ENCODE measurements at regions of chr12 and their contacts with region 1.

Region 1: DNA sequence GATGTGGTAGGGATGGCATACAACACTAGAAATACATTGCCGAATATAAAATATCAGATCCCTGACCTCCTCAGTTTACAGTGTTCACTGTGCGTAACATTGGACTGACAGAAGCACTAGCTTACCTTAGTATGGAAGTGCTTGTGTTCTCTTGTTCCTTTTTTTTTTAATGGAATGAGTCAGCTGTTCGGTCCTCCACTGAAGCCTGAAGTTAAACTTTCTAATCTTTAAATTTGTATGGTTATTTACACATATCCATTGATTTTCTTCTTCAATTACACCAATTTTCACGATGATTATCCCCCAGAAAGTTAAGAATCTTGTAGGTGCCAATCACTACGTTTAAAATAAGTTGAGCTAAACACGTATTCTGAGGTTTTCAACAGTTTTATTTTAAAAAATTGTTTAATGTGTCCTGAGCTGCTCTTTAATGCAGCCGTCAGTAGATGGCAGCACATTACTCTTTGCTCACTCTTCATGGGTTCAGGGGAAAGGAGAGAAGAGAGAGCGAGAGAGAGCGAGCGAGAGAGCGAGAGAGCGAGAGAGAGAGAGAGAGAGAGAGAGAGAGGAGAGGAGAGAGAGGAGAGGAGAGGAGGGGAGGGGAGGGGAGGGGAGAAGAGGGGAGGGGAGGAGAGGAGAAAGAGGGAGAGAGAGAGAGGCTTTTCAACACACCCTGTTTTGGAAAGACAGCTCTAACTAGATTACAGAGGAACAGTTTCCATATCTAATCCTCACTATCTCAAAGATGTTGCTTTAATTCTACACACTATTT is 134.7 kb upstream of the SCAF11 start:
- DNase-seq: no peak
- ATAC-seq: peak; percentile 96
- H3K4me3 ChIP-seq: no peak overlapping the region
- H3K27ac ChIP-seq: no peak overlapping the region
- H3K4me1 ChIP-seq: no peaks in the 10 kb centered on the region
- H3K27me3 ChIP-seq: no peaks in the 10 kb centered on the region; a peak in 1 of 4 replicates
- CTCF ChIP-seq: peak; percentile 58 to 74 (median 61); a peak in 5 of 6 replicates
- EP300 ChIP-seq: no peak
- POLR2A ChIP-seq: no peak
- RAD21 ChIP-seq: peak; percentile 84

Region 2: GRCh38 chr12:46147144-46147543 is 22.1 kb after region 1 on chr12:
- CTCF ChIA-PET with region 1: interaction called, 36 read pairs
- POLR2A ChIA-PET with region 1: no interaction called
- RAD21 ChIA-PET with region 1: interaction called, 22 read pairs
- SMC1A ChIA-PET with region 1: interaction called, 22 read pairs
- in situ Hi-C with region 1: no loop called
- intact Hi-C with region 1: no loop called
- DNase-seq: no peak
- ATAC-seq: peak; percentile 87
- H3K4me3 ChIP-seq: no peak overlapping the region
- H3K27ac ChIP-seq: no peak overlapping the region
- H3K4me1 ChIP-seq: no peaks in the 10 kb centered on the region
- H3K27me3 ChIP-seq: no peaks in the 10 kb centered on the region
- CTCF ChIP-seq: no peak
- EP300 ChIP-seq: no peak
- POLR2A ChIP-seq: no peak
- RAD21 ChIP-seq: no peak

Region 3: GRCh38 chr12:46209914-46210872 is 85.2 kb after region 1 on chr12:
- CTCF ChIA-PET with region 1: interaction called, 16 read pairs
- POLR2A ChIA-PET with region 1: no interaction called
- RAD21 ChIA-PET with region 1: interaction called, 3 read pairs
- SMC1A ChIA-PET with region 1: interaction called, 21 read pairs
- in situ Hi-C with region 1: no loop called
- intact Hi-C with region 1: no loop called
- DNase-seq: peak; percentile 68
- ATAC-seq: peak; percentile 84
- H3K4me3 ChIP-seq: no peak overlapping the region
- H3K27ac ChIP-seq: peak overlapping the region; percentile 85
- H3K4me1 ChIP-seq: peaks cover 59% of the 10 kb centered on the region
- H3K27me3 ChIP-seq: no peaks in the 10 kb centered on the region
- CTCF ChIP-seq: no peak
- EP300 ChIP-seq: peak; percentile 83 to 86
- POLR2A ChIP-seq: peak; percentile 52; the same call in 1 of the 2 replicates
- RAD21 ChIP-seq: no peak

Region 4: DNA sequence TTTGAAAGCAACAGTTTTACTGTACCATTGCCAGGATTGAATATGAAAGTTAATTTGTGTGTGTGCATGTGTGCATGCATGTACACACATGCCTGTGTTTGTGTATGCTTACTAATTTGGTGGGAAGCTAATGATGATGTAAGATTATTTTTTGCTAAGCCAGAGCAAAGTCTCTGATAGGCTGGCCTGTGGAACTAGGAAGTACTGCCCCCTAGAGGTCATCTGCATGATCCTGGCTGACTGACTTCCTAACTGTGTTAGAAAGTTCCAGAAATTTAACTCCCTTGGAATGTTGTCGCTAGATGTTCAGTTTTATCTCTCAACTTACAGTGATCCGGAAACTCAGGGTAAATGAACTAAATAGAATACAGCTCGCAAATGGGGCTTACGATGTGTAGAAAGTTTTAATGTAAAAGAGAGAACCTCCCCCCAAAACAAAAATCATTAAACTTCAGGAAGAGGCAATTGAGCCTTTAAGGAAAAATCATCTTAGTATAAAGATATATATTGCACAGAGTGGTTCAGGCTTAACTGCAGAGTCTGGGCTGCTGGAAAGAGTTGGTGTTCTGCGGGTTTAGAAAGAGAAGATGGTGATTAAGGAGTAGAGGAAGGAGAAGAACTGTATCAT is 178.1 kb after region 1 on chr12:
- CTCF ChIA-PET with region 1: interaction called, 102 read pairs
- POLR2A ChIA-PET with region 1: interaction called, 6 read pairs
- RAD21 ChIA-PET with region 1: interaction called, 50 read pairs
- SMC1A ChIA-PET with region 1: interaction called, 86 read pairs
- in situ Hi-C with region 1: no loop called
- intact Hi-C with region 1: loop called (anchors 5 kb)
- DNase-seq: peak; percentile 2
- ATAC-seq: peak; percentile 91
- H3K4me3 ChIP-seq: no peak overlapping the region
- H3K27ac ChIP-seq: no peak overlapping the region
- H3K4me1 ChIP-seq: no peaks in the 10 kb centered on the region
- H3K27me3 ChIP-seq: no peaks in the 10 kb centered on the region; a peak in 1 of 4 replicates
- CTCF ChIP-seq: peak; percentile 54 to 58 (median 57)
- EP300 ChIP-seq: no peak
- POLR2A ChIP-seq: no peak
- RAD21 ChIP-seq: peak; percentile 66

Region 5: DNA sequence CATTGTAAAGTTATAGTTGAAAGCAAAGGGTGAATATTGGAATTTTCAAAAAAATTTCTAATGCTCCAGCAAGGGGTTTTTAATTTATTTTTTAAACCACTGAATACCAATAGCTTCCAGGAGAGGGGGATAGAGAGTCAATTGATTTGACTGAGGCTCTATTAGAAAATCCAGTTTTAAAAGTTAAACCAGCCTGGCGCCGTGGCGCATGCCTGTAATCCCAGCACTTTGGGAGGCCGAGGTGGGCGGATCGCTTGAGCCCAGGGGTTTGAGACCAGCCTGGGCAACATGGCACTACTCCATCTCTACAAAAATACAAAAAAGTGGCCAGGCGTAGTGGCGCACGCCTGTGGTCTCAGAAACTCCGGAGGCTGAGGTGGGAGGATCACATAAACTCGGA is 550.7 kb after region 1 on chr12:
- CTCF ChIA-PET with region 1: interaction called, 30 read pairs
- POLR2A ChIA-PET with region 1: no interaction called
- RAD21 ChIA-PET with region 1: interaction called, 20 read pairs
- SMC1A ChIA-PET with region 1: interaction called, 20 read pairs
- in situ Hi-C with region 1: loop called (anchors 25 kb)
- intact Hi-C with region 1: no loop called
- DNase-seq: no peak
- ATAC-seq: 0 out of 3 replicates have a peak, but pooled peaks have one; percentile 29
- H3K4me3 ChIP-seq: no peak overlapping the region
- H3K27ac ChIP-seq: no peak overlapping the region
- H3K4me1 ChIP-seq: no peaks in the 10 kb centered on the region
- H3K27me3 ChIP-seq: no peaks in the 10 kb centered on the region
- CTCF ChIP-seq: peak; percentile 35 to 39 (median 35); a peak in 4 of 6 replicates
- EP300 ChIP-seq: no peak
- POLR2A ChIP-seq: no peak
- RAD21 ChIP-seq: peak; percentile 62